Activated CD8-positive, alpha-beta T cell treated with anti-CD3 and anti-CD28 coated beads, Interleukin-2, amount 10 ng/mL, durations not matched to agents 7 days and 5 days (primary cell): ENCODE measurements at regions of chr5 and their contacts with region 1.

Region 1: DNA sequence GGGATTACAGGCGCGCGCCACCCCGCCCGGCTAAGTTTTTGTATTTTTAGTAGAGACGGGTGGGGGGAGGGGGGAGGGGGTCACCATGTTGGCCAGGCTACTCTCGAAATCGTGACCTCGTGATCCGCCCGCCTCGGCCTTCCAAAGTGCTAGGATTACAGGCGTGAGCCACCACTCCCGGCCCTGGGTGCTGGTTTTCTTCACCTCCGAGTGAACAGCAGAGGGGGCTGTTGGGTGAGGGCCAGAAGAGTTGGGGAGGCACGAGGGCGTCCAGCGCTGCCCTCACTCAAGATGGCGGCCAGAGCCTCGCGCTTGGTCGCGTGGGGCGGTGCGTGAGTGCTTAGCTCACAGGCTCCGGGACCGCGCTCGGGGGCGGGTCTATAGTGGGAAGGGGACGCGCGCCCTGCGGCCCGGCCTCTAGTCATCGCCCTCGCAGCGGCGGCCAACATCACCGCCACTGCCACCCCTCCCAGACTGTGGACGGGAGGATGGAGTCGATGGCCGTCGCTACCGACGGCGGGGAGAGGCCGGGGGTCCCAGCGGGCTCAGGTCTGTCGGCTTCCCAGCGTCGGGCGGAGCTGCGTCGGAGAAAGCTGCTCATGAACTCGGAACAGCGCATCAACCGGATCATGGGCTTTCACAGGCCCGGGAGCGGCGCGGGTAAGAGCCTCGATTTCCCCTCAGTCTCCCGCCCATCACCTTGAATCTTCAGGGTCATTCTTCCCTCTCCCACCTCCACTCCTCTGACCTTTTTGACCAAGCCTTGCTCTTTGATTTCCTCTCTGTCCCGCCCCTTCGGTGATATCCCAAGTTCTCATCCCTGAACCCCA is at the start of gene CAMLG:
- DNase-seq: peak; percentile 98
- ATAC-seq: peak; percentile 99
- H3K4me3 Mint-ChIP-seq: peak within 1 kb of the TSS; percentile 84
- H3K27ac Mint-ChIP-seq: peak within 1 kb of the TSS; percentile 93
- H3K4me1 Mint-ChIP-seq: peaks cover 30% of the 10 kb centered on the region
- H3K27me3 Mint-ChIP-seq: no peaks in the 10 kb centered on the region
- total RNA-seq, gene CAMLG: 23.1 TPM

Region 2: DNA sequence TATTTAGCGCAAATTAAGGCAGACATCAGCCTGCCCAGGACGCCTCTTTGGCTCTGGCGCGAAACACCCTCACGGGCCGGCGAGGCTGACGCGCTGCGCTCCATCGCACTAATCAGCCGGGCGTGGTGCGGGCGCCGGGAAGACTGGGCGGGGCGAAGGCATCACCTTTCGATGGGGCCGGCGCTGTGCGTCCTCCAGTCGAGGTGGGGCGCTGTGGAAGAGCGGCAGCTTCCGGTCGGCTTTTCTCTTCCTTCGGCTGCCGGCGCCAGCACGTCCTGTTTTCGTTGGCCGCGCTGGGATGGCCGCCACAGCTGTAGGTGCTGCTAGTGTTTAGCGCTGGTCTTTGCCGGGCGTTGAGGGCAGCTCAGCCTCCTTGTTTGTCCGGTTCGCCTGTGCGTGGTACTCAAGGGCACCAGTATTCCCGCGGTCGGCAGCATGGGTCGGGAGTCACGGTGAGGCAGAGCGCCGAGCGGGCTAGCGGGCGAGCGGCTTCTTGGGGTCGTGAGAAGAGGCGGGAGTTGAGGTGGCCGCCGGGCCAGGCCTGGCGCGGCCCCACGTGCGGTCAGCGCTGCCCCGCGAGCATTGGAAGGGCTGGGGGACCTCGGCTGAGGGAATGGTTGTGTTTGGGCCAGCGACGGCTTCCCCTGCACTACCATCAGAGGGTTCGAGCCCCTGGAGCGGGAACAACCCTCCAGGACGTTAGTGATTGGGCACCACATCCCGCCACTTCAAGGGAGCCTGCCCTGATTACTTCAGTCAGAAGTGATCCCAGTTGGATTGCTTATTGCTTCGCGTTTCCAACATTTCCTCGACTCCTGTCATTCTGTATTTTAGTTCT is 20.4 kb after region 1 on chr5 and contains the start of gene DDX46:
- CTCF ChIA-PET with region 1: interaction called, 83 read pairs
- POLR2A ChIA-PET with region 1: interaction called, 47 read pairs
- DNase-seq: peak; percentile 97
- ATAC-seq: peak; percentile 98
- H3K4me3 Mint-ChIP-seq: peak within 1 kb of the TSS; percentile 99
- H3K27ac Mint-ChIP-seq: peak within 1 kb of the TSS; percentile 97
- H3K4me1 Mint-ChIP-seq: peaks cover 31% of the 10 kb centered on the region
- H3K27me3 Mint-ChIP-seq: no peaks in the 10 kb centered on the region
- total RNA-seq, gene DDX46: 69.6 to 72.8 TPM